IMR-90 (cell line): ENCODE measurements at regions of chr12 and their contacts with region 1.

Region 1: DNA sequence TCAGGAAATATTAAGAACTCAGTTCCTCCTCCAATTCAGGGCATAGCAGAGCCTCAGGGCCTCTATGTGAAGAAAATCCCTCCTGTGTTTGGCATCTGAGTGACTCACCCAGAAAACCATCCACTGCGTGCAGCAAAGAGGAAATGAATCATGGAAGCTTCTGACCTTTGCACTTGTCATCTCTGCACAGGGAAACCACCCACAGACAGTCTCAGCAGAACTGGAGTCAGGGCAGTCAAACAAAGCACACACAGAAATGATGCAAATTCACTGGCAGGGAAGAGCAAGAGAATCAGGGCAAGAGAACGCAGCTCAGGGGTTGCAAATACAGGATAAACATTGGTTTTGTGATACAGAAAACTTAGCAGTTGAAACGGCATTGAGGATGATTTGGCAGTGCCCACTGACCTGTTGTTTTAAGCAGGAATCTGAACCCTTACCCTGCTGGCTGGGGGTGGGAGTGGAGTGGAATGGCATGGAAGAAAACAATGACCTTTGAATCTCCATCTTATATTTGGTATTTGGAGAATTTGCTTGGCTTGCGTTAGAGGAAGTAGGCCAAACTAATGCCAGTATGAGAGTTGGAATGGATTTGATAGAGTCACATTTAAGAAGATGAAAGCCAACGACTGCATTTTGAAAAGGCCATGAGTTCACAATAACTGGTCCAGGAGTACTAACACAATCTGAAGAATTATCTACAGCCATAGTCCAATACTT is 53.5 kb downstream of the PHLDA1 start:
- DNase-seq: peak; percentile 100
- ATAC-seq: peak; percentile 91
- H3K4me3 ChIP-seq: no peak overlapping the region
- H3K27ac ChIP-seq: peak overlapping the region; percentile 99
- H3K4me1 ChIP-seq: peaks cover 20% of the 10 kb centered on the region
- H3K27me3 ChIP-seq: no peaks in the 10 kb centered on the region
- CTCF ChIP-seq: no peak; the same call in 1 of the 2 replicates
- POLR2A ChIP-seq: 0 out of 2 replicates have a peak, but pooled peaks have one; percentile 2
- RAD21 ChIP-seq: peak; percentile 44; the same call in 1 of the 2 replicates

Region 2: GRCh38 chr12:75820848-75821578 is 157.1 kb before region 1 on chr12:
- CTCF ChIA-PET with region 1: no interaction called
- POLR2A ChIA-PET with region 1: no interaction called
- dilution Hi-C with region 1: no loop called
- in situ Hi-C with region 1: no loop called
- intact Hi-C with region 1: loop called (anchors 2 kb)
- DNase-seq: peak; percentile 97
- ATAC-seq: peak; percentile 71
- H3K4me3 ChIP-seq: no peak overlapping the region; the same call in 1 of the 2 replicates
- H3K27ac ChIP-seq: peak overlapping the region; percentile 40
- H3K4me1 ChIP-seq: peaks cover 33% of the 10 kb centered on the region
- H3K27me3 ChIP-seq: no peaks in the 10 kb centered on the region
- CTCF ChIP-seq: peak; percentile 18; the same call in 1 of the 2 replicates
- POLR2A ChIP-seq: no peak
- RAD21 ChIP-seq: 0 out of 2 replicates have a peak, but pooled peaks have one; percentile 20

Region 3: DNA sequence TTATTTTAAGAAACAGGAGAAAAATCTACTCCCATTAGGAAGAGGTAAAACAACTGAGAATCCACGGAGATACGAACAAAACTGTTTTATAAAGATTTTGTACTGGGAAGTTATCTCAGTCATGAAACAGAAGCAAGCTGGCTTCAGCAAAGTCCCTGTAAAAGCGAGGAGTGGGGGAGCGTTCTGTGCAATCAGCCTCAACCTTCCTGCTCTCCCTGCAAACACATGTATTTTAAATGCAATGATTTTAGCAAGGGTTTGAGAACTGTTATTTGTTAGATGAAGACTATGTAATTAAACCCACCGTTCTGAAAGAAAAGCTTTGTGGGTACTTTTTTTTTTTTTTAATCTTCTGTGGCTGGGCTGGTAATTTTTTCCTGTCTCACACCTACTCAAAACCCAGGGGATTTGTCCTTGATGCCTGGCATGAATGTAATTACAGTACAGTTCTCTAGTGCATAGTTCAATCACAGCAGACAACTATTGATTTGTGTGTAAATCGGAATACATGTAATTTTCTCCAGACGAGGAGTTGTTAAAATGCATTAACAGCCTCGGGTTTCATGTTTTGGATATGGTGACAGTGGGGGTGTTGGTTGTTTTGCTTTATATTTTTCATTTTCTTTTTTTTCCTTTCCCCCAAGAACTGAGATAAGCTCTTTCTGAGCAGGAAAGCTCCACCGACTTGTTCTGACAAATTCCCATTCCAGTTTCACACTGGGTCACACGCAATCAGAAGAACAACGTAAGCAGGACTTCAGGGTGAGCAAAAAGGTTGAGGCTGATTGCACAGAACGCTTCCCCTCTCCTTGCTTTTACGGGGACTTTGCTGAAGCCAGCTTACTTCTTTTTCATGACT is 100.1 kb before region 1 on chr12:
- CTCF ChIA-PET with region 1: interaction called, 5 read pairs
- POLR2A ChIA-PET with region 1: no interaction called
- dilution Hi-C with region 1: no loop called
- in situ Hi-C with region 1: no loop called
- intact Hi-C with region 1: loop called (anchors 5 kb)
- DNase-seq: peak; percentile 93
- ATAC-seq: peak; percentile 60
- H3K4me3 ChIP-seq: no peak overlapping the region
- H3K27ac ChIP-seq: peak overlapping the region; percentile 95
- H3K4me1 ChIP-seq: peaks cover 7% of the 10 kb centered on the region
- H3K27me3 ChIP-seq: no peaks in the 10 kb centered on the region
- CTCF ChIP-seq: no peak
- POLR2A ChIP-seq: no peak
- RAD21 ChIP-seq: 0 out of 2 replicates have a peak, but pooled peaks have one; percentile 7

Region 4: DNA sequence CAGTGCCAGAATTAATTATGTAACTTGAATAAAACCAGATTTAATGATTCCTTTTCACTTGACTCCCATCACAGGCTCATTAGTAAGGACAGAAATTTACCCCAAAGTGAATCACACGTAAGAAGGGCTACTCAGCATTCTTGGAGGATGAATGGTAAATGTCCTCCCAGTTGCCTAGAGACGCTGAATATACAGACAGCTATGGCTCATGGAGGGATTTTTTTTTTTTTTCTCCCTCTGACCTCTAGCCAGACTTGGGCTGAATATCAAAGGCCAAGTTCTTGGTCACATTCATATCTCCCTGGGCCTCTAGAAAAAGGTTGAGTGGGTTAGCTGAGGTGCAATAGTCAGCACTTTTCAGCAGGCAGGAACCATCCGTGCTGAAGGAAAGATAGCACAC is 24.1 kb before region 1 on chr12:
- CTCF ChIA-PET with region 1: no interaction called
- POLR2A ChIA-PET with region 1: no interaction called
- dilution Hi-C with region 1: no loop called
- in situ Hi-C with region 1: no loop called
- intact Hi-C with region 1: loop called (anchors 1 kb)
- DNase-seq: peak; percentile 97
- ATAC-seq: peak; percentile 81
- H3K4me3 ChIP-seq: no peak overlapping the region
- H3K27ac ChIP-seq: peak overlapping the region; percentile 91
- H3K4me1 ChIP-seq: peaks cover 18% of the 10 kb centered on the region
- H3K27me3 ChIP-seq: no peaks in the 10 kb centered on the region
- CTCF ChIP-seq: no peak
- POLR2A ChIP-seq: no peak
- RAD21 ChIP-seq: peak; percentile 21; the same call in 1 of the 2 replicates